ENCODE measurements at regions of chr4 and their contacts with region 1.

Region 1: GRCh38 chr4:109444182-109444844 is 10.7 kb downstream of the SEC24B start:
- DNase-seq: no peak
- ATAC-seq: no peak
- H3K4me3 ChIP-seq: no peak overlapping the region
- H3K27ac ChIP-seq: no peak overlapping the region
- H3K4me1 ChIP-seq: peaks cover 2 to 6% of the 10 kb centered on the region in 2 donors
- H3K27me3 ChIP-seq: no peaks in the 10 kb centered on the region

Region 2: GRCh38 chr4:108917255-108917654 is 527.1 kb before region 1 on chr4:
- intact Hi-C with region 1: no loop called
- DNase-seq: no peak
- ATAC-seq: no peak
- H3K4me3 ChIP-seq: no peak overlapping the region
- H3K27ac ChIP-seq: no peak overlapping the region
- H3K4me1 ChIP-seq: no peaks in the 10 kb centered on the region
- H3K27me3 ChIP-seq: no peaks in the 10 kb centered on the region

Region 3: DNA sequence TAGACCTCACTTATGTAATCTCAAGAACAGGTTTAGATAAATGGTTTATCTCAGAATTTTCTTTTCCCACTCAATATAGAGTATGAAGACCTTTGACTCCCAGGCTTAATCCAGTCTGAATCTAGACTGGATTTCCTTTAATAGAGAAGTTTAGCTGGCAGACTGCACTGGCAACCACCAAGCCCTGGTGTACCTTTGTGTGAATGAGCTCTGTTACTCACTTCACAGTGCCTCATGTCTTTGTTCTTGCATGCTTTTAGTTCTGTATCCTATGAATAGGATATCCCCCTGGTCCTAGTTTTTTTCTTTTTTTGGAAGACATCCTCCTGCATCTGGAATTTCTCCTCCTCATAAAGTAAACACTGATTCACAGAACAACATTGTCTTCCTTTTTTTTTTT is 62.6 kb after region 1 on chr4:
- intact Hi-C with region 1: loop called in 1 of 2 experiments (anchors 10 kb)
- DNase-seq: no peak
- ATAC-seq: no peak
- H3K4me3 ChIP-seq: no peak overlapping the region
- H3K27ac ChIP-seq: no peak overlapping the region
- H3K4me1 ChIP-seq: no peaks in the 10 kb centered on the region
- H3K27me3 ChIP-seq: no peaks in the 10 kb centered on the region